GM12878 (cell line): ENCODE measurements at regions of chr10 and their contacts with region 1.

Region 1: DNA sequence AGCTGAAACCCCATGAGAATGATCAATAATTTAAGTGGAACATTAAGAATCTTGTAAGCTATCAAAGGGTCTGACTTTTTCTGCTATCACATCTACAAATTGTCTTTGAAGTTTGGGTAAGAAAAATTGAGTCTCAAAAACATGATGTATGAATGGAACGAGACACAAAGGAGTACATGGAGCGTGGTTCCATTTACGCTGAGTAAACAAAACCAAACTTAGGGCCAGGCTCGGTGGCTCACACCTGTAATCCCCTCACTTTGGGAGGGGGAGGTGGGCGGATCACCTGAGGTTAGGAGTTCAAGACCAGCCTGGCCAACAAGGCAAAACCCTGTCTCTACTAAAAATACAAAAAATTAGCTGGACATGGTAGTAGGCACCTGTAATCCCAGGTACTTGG is 24.3 kb downstream of the SMC3 start:
- DNase-seq: no peak
- ATAC-seq: no peak
- H3K4me3 ChIP-seq: no peak overlapping the region
- H3K27ac ChIP-seq: no peak overlapping the region
- H3K4me1 ChIP-seq: no peaks in the 10 kb centered on the region
- H3K27me3 ChIP-seq: no peaks in the 10 kb centered on the region
- CTCF ChIP-seq: no peak
- EP300 ChIP-seq: no peak
- POLR2A ChIP-seq: no peak
- RAD21 ChIP-seq: no peak

Region 2: DNA sequence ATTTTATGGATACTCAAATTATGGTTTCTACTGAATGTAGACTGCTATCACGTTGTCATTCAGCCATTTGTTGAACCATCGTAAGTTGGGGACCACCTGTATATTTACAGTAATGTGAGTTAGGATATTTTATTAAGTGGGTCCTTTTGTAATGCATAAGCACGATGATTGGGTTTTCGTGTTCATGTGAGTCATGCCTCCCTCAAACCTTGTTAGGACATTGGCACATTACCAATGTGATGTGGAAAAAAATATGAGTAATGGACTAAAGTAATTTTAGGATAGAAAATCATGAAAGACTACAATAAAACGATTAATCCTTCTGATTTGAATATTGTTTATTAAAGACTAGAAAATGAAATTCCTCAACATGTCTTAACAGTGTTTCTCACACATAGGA is 15.5 kb before region 1 on chr10:
- CTCF ChIA-PET with region 1: interaction called, 3 read pairs
- POLR2A ChIA-PET with region 1: no interaction called
- RAD21 ChIA-PET with region 1: no interaction called
- SMC1A ChIA-PET with region 1: interaction called, 10 read pairs
- in situ Hi-C with region 1: no loop called
- intact Hi-C with region 1: no loop called
- DNase-seq: no peak
- ATAC-seq: no peak
- H3K4me3 ChIP-seq: no peak overlapping the region
- H3K27ac ChIP-seq: no peak overlapping the region
- H3K4me1 ChIP-seq: no peaks in the 10 kb centered on the region; the same call in 1 of the 2 replicates
- H3K27me3 ChIP-seq: no peaks in the 10 kb centered on the region
- CTCF ChIP-seq: no peak
- EP300 ChIP-seq: no peak
- POLR2A ChIP-seq: no peak
- RAD21 ChIP-seq: no peak